ENCODE measurements at regions of chr6 and their contacts with region 1.

Region 1: DNA sequence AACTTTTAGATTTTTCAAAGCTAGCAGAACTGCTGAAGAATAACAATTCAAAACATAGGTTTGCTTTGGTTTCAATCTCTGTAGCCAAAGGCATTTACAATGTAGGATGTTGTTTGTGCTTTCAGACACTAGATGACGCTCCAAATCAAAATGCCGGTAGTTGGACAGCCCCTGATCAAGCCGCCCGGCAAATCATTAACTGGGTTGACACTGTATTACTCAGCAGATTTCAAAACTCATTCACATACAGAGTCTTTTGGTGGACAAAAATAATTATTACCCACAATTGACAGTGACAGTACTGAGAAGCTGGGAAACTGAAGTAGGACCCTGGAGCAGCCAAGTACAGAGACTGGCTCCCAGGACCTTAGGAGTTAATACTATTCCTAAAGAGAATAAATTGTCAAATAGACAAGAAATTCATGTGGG is 21.3 kb upstream of the HFE start:
- DNase-seq: no peak
- H3K4me3 ChIP-seq: no peak overlapping the region
- CTCF ChIP-seq: peak; percentile 75

Region 2: DNA sequence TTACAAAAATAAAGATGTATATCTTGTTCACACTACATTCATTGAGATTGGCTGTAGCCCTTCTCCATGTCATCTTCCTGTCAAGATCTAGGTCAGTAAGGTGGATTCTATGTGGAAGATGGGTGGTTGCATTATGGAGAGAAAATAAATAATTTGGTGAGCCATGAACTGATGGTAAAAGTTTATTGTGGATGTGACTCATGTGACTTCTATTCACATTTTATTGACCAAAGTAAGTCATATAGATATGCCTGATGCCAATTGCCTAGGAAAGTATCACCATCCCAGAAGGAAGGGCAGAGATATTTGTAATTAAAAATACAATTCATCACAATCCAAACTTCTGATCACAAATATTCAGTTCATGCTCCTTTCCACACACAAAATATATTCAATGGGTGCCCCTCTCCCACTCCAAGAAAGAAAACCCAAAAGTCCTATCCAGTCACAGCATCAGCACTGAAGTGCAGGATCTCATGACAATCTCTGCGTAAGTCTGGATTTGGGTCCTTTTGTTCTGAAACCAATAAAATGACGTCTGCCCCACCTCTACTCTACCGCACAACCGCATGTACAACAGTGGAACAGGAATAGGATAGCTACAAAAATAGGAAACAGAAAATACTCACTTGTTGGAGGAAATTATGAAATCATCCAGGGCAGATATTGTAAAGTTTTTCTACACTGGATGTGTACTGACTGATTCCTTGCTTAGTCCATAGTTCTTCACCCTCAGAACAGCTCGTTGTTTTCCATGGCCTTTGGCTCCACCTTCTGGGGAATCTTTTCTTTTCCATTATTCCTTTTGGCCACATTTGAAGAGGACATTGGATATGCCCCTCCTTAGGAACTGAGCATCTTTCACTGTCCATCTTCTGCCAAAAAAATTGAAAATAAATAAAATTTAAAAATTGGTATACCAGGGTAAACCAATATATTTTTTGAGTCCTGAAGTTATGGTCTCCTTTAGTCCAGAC is 175.8 kb before region 1 on chr6:
- CTCF ChIA-PET with region 1: no interaction called
- POLR2A ChIA-PET with region 1: no interaction called
- DNase-seq: no peak
- H3K4me3 ChIP-seq: no peak overlapping the region
- CTCF ChIP-seq: peak; percentile 12

Region 3: GRCh38 chr6:26031595-26032339 is 34.2 kb before region 1 on chr6:
- CTCF ChIA-PET with region 1: interaction called, 22 read pairs
- POLR2A ChIA-PET with region 1: no interaction called
- DNase-seq: no peak
- H3K4me3 ChIP-seq: peak overlapping the region; percentile 69
- CTCF ChIP-seq: peak; percentile 20

Region 4: DNA sequence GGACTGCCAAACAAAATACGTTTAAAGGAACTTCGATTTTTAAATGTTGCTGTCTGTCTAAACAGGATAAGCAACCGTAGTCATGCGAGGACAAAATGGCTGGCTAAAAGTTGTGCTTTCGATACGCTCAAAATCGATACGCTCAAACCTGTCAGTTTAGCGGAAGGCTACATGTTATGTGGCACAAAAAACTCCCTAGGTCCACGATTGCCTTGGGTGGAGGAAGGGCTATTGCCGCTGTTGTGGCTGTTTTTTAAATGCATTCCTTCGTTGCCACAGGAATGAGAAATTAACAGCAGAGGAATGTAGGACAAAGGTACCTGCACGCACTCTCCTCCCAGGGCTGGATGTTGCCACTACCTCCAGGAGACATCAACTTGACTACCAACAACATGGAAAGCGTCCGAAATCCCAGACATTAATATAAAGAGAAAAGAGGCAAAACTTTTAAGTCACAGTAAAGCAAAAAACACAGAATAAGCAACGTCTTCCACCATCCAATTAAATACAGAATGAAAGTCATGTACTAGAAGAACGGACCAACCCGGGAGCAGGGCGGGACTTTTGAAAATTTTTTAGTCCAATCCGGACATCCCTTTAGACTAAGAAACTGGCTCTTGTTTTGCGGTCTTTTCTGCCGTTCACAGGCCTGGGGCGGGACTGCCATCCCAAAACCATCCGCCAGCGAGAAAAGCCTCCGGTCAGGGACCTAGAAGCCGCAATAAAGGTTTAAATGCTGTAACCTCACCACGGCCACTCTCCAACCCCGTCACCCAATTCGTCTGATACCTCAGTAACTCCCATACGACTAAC is 10.9 kb before region 1 on chr6:
- CTCF ChIA-PET with region 1: interaction called, 51 read pairs
- POLR2A ChIA-PET with region 1: no interaction called
- DNase-seq: peak; percentile 86
- H3K4me3 ChIP-seq: peak overlapping the region; percentile 72
- CTCF ChIP-seq: no peak

Region 5: DNA sequence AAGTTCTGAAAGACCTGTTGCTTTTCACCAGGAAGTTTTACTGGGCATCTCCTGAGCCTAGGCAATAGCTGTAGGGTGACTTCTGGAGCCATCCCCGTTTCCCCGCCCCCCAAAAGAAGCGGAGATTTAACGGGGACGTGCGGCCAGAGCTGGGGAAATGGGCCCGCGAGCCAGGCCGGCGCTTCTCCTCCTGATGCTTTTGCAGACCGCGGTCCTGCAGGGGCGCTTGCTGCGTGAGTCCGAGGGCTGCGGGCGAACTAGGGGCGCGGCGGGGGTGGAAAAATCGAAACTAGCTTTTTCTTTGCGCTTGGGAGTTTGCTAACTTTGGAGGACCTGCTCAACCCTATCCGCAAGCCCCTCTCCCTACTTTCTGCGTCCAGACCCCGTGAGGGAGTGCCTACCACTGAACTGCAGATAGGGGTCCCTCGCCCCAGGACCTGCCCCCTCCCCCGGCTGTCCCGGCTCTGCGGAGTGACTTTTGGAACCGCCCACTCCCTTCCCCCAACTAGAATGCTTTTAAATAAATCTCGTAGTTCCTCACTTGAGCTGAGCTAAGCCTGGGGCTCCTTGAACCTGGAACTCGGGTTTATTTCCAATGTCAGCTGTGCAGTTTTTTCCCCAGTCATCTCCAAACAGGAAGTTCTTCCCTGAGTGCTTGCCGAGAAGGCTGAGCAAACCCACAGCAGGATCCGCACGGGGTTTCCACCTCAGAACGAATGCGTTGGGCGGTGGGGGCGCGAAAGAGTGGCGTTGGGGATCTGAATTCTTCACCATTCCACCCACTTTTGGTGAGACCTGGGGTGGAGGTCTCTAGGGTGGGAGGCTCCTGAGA is 21.5 kb after region 1 on chr6 and contains the start of gene HFE:
- CTCF ChIA-PET with region 1: interaction called, 1,301 read pairs
- POLR2A ChIA-PET with region 1: interaction called, 3 read pairs
- DNase-seq: no peak
- H3K4me3 ChIP-seq: peak within 1 kb of the TSS; percentile 73
- CTCF ChIP-seq: no peak

Region 6: GRCh38 chr6:26103770-26104456 is 37.9 kb after region 1 on chr6:
- CTCF ChIA-PET with region 1: interaction called, 1,301 read pairs
- POLR2A ChIA-PET with region 1: interaction called, 4 read pairs
- DNase-seq: peak; percentile 79
- H3K4me3 ChIP-seq: peak overlapping the region; percentile 65
- CTCF ChIP-seq: peak; percentile 41

Region 7: DNA sequence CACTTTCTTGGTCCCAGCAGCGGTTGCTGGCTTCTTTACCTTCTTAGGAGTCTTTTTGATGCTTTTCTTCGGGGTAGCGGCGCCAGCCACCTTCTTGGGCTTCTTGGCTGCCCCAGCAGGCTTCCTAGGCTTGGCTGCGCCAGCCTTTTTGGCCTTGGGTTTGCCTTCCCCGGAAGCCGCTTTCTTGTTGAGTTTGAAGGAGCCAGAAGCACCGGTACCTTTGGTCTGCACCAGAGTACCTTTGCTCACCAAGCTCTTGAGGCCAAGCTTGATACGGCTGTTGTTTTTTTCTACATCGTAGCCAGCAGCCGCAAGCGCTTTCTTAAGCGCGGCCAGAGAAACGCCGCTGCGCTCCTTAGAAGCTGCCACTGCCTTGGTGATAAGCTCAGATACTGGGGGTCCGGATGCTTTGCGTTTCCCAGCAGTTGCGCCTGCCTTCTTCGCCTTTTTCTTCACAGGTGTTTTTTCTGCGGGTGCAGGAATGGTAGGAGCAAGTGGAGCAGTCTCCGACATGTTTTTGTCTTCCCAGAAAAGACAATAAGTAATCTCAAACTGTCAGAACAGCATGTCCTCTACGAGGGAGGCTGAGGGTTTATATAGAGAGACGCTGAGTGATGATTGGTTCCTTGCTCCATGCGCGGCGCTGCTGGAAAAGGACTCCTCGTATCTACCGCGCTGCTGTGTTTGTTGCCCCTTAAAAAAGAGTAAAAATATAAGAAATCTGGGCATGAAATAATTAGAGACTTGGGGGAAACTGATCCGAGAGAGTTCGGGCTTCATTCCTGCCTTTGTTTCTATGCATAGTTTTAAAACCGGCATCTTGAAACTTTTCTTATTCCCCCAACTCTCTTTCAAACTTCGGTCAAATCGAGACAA is 168.7 kb after region 1 on chr6:
- CTCF ChIA-PET with region 1: no interaction called
- POLR2A ChIA-PET with region 1: no interaction called
- DNase-seq: no peak
- H3K4me3 ChIP-seq: peak overlapping the region; percentile 60
- CTCF ChIP-seq: no peak